ENCODE measurements at regions of chr9 and their contacts with region 1.

Region 1: GRCh38 chr9:4762108-4762885 is 21.3 kb upstream of the AK3 start:
- DNase-seq: peak; percentile 88
- ATAC-seq: peak; percentile 81
- H3K4me3 Mint-ChIP-seq: peak overlapping the region; percentile 5
- H3K27ac Mint-ChIP-seq: peak overlapping the region; percentile 3
- H3K4me1 Mint-ChIP-seq: peaks cover 19% of the 10 kb centered on the region
- H3K27me3 Mint-ChIP-seq: peaks cover 13% of the 10 kb centered on the region

Region 2: DNA sequence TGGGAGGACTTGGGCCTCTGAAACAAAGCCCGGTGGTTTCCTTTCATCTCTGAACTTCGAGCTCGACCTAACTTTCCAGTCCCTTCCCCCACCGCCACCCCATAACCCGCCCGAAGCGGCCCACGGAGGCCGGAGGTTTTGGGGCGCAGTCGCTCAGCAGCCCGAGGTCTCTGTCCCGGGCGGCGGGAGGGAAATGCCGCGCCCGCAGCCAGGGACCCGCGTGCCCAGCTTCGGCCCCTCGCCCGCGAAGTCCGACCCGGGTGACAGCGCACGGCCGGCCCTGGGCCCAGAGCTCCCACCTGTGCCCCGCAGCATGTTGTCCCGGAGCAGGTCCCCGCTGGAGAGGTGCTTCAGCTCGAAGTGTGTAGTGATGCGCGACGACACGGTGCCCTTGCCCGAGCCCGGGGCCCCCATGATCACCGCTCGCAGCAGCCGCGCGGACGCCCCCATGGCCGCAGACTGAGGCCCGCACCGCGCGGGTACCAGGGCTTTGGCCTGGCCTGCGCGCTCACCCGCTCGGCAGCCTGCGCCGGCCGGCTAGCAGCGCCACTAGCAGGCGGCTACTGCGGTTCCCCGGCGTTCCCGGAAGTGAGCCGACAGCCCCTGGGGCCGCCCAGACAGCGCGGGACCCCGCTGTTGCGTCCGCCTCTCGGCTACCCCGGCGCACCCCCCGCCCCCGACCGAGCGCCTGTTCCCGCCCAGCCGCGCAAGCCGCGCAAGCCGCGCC is 21.5 kb before region 1 on chr9 and contains the start of gene AK3:
- CTCF ChIA-PET with region 1: interaction called, 18 read pairs
- DNase-seq: peak; percentile 94
- ATAC-seq: peak; percentile 94
- H3K4me3 Mint-ChIP-seq: peak within 1 kb of the TSS; percentile 86
- H3K27ac Mint-ChIP-seq: peak within 1 kb of the TSS; percentile 89
- H3K4me1 Mint-ChIP-seq: peaks cover 24% of the 10 kb centered on the region
- H3K27me3 Mint-ChIP-seq: no peaks in the 10 kb centered on the region
- total RNA-seq, gene AK3: 35.6 to 35.8 TPM

Region 3: DNA sequence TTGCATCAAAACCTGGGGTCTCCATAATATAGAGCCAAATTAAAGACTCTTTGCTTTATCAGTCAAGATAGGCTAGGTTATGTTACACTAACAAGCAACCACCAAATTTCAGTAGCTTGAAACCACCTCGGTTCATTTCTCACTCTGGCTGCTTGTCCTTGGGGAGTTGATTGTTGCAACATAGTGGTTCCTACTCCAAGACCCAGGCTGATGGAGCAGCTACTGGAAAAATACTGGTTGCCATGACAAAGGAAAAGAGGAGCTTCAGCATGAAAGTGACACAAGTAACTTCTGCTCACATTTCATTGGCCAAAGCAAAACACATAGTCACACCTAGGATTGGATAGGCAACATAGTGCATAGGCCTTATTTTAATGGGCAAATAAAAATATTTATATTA is 11.9 kb after region 1 on chr9:
- CTCF ChIA-PET with region 1: interaction called, 11 read pairs
- DNase-seq: no peak
- ATAC-seq: no peak
- H3K4me3 Mint-ChIP-seq: no peak overlapping the region
- H3K27ac Mint-ChIP-seq: no peak overlapping the region
- H3K4me1 Mint-ChIP-seq: peaks cover 7% of the 10 kb centered on the region
- H3K27me3 Mint-ChIP-seq: peaks cover under 1% of the 10 kb centered on the region

Region 4: DNA sequence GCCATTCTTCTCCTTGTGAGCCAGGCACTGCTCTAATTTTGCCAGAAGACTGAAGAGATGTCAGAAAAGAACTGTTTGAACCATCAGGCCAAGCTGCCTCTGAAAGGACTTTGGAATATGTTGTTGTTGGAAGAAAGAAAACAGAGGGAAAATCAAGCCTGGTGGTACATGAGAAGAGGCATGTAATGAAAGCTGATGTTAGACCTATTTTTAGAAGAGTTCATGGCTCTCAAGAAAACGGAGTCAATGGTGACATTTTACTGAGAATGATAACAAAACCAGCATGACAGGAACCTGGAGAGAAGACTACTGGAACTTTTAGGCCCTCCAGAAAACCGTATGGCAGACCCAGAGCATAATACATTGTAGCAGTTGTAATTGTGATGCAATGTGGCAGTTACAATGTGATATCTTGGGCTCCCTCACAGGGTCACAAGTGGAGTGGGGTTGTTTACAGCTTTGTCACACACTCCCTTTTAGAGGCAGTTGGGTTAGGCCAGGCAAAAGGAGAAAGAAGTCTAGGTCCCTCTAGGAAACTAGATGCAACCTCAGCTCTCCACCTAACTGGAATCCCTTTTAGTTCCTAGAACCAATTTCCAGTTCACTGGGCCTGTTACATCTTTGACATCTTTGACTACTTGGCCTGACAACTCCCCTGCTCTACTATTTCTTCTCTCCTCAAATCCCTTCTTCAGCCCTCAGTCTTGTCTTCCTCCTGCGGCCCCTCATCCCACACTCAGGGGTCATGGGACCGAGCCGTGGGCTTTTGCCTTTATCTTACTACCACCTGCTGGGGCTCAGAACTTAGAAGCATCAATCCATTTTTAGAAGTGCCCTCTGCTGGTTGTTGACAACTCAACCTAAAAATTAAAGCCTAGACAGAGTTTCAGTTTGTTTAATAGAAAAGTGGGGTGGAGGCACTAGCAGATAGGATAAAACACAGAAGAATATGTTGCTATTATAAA is 161.6 kb after region 1 on chr9:
- CTCF ChIA-PET with region 1: interaction called, 31 read pairs
- DNase-seq: no peak
- ATAC-seq: peak; percentile 79
- H3K4me3 Mint-ChIP-seq: no peak overlapping the region
- H3K27ac Mint-ChIP-seq: peak overlapping the region; percentile 37
- H3K4me1 Mint-ChIP-seq: peaks cover 32% of the 10 kb centered on the region
- H3K27me3 Mint-ChIP-seq: no peaks in the 10 kb centered on the region

Region 5: DNA sequence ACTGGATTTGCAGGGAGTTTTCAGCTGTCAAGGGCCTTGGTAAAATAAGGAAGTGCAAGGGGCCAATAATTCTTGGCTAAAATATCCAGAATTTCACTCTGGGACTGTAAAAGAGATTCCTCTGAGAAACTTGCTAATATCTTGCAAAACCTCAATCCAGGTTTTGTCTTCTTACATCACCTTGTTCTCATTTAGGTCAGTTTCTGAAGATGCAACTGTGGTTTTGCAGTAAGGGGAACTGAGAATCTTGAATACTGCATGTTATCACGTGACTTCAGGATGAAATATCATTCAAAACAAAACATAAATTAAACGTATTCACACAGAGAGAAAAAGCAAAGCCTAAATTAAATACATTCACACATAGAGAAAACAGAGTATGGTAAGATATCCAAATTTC is 831.6 kb after region 1 on chr9:
- CTCF ChIA-PET with region 1: interaction called, 12 read pairs
- DNase-seq: no peak
- ATAC-seq: no peak
- H3K4me3 Mint-ChIP-seq: no peak overlapping the region
- H3K27ac Mint-ChIP-seq: no peak overlapping the region
- H3K4me1 Mint-ChIP-seq: peaks cover 19% of the 10 kb centered on the region
- H3K27me3 Mint-ChIP-seq: peaks cover 2% of the 10 kb centered on the region

Measured in activated CD8-positive, alpha-beta memory T cell treated with anti-CD3 and anti-CD28 coated beads, Interleukin-2, amount 10 ng/mL, durations not matched to agents 7 days and 5 days (primary cell).